Ascending aorta (tissue), 2 donors: ENCODE measurements at regions of chr2 and their contacts with region 1.

Region 1: DNA sequence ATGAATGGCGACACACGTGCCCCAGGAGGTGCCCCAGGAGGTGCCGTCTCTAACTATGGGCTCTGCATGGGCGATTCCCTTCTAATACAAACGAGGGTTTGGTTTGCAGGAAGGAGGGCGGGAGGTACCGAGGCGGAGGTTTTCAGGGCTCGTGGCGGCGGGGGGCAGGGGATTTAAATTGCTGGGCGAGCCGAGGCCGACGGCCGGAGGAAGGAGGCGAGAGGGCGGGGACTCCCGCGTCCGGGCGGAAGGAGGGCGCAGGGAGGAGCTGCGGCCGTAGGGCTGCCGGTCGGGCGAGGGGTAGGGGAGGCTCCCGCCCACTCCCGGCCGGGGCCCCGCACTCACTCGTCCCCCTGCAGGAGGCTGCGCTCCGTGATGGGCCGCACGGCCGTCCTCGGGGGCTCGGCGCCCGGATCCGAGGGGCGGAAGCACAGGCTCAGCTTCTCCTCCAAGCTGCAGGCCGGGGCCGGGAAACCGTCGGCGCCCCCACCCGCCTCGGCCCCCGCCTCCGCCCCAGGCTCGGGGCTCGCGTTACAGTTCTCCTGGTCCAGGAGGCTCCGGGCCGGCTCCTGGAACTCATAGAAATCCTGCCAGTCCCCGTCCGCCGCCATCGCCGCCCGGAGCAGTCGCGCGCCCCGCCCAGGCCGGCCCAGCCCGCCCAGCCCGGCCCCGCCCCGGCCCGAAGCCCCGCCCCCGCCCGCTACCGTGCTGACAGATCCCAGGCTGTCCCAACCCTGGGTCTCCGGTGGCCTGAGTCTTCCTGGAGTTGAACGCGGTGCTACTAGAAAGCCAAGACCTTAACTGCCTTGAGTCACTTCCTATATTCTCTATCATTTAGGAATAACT is at the start of gene FEZ2:
- DNase-seq: peak in 1 of 2 donors; percentile 81
- H3K4me3 ChIP-seq: peak within 1 kb of the TSS; percentile 99 to 100
- H3K27ac ChIP-seq: peak within 1 kb of the TSS; percentile 96 to 97
- H3K4me1 ChIP-seq: peaks cover 5 to 20% of the 10 kb centered on the region in 2 donors
- H3K27me3 ChIP-seq: no peaks in the 10 kb centered on the region
- CTCF ChIP-seq: no peak
- total RNA-seq, gene FEZ2: 31.8 TPM

Region 2: GRCh38 chr2:36408198-36408703 is 189.5 kb before region 1 on chr2:
- intact Hi-C with region 1: no loop called
- DNase-seq: no peak
- H3K4me3 ChIP-seq: peak overlapping the region in 1 of 2 donors; percentile 25
- H3K27ac ChIP-seq: peak overlapping the region; percentile 67 to 69
- H3K4me1 ChIP-seq: peaks cover 3 to 76% of the 10 kb centered on the region in 2 donors
- H3K27me3 ChIP-seq: no peaks in the 10 kb centered on the region
- CTCF ChIP-seq: no peak

Region 3: GRCh38 chr2:36561237-36561944 is 36.4 kb before region 1 on chr2:
- intact Hi-C with region 1: loop called (anchors 5 kb)
- DNase-seq: peak in 1 of 2 donors; percentile 74
- H3K4me3 ChIP-seq: no peak overlapping the region
- H3K27ac ChIP-seq: peak overlapping the region; percentile 70 to 77
- H3K4me1 ChIP-seq: peaks cover 0 to 26% of the 10 kb centered on the region in 2 donors
- H3K27me3 ChIP-seq: no peaks in the 10 kb centered on the region
- CTCF ChIP-seq: no peak

Region 4: GRCh38 chr2:36663851-36664695 is 66.3 kb after region 1 on chr2:
- intact Hi-C with region 1: loop called (anchors 5 kb)
- DNase-seq: no peak
- H3K4me3 ChIP-seq: no peak overlapping the region
- H3K27ac ChIP-seq: no peak overlapping the region
- H3K4me1 ChIP-seq: no peaks in the 10 kb centered on the region
- H3K27me3 ChIP-seq: no peaks in the 10 kb centered on the region
- CTCF ChIP-seq: peak; percentile 59 to 80 (median 79)